ENCODE measurements at regions of chr1 and their contacts with region 1.

Region 1: GRCh38 chr1:231211005-231211857 is 29.8 kb upstream of the GNPAT start:
- DNase-seq: peak; percentile 92
- CTCF ChIP-seq: peak; percentile 89

Region 2: GRCh38 chr1:231196728-231197127 is 14.5 kb before region 1 on chr1:
- CTCF ChIA-PET with region 1: interaction called, 10 read pairs
- POLR2A ChIA-PET with region 1: no interaction called
- DNase-seq: no peak
- CTCF ChIP-seq: no peak

Region 3: GRCh38 chr1:231421993-231422764 is 210.9 kb after region 1 on chr1 and contains the start of gene EGLN1:
- CTCF ChIA-PET with region 1: no interaction called
- POLR2A ChIA-PET with region 1: no interaction called
- DNase-seq: peak; percentile 92
- CTCF ChIP-seq: peak; percentile 59

Measured in GM10248 (cell line).